ENCODE measurements at regions of chr10 and their contacts with region 1.

Region 1: GRCh38 chr10:77494327-77494726 is 143.3 kb downstream of the KCNMA1 start:
- DNase-seq: no peak
- H3K4me3 ChIP-seq: no peak overlapping the region
- H3K27ac ChIP-seq: no peak overlapping the region
- H3K4me1 ChIP-seq: peaks cover 2 to 4% (median 3%) of the 10 kb centered on the region in 4 experiments; a peak in 3 of 7 replicates
- H3K27me3 ChIP-seq: no peaks in the 10 kb centered on the region
- CTCF ChIP-seq: peak; percentile 53 to 67 (median 66)
- EP300 ChIP-seq: no peak
- POLR2A ChIP-seq: no peak
- RAD21 ChIP-seq: peak; percentile 76 to 79

Region 2: GRCh38 chr10:77436257-77436975 is 57.9 kb before region 1 on chr10:
- CTCF ChIA-PET with region 1: no interaction called
- POLR2A ChIA-PET with region 1: no interaction called
- DNase-seq: no peak
- H3K4me3 ChIP-seq: no peak overlapping the region
- H3K27ac ChIP-seq: no peak overlapping the region
- H3K4me1 ChIP-seq: peaks cover 0 to 12% (median 2%) of the 10 kb centered on the region in 4 experiments; a peak in 3 of 7 replicates
- H3K27me3 ChIP-seq: no peaks in the 10 kb centered on the region
- CTCF ChIP-seq: no peak
- EP300 ChIP-seq: no peak
- POLR2A ChIP-seq: no peak
- RAD21 ChIP-seq: no peak

Region 3: GRCh38 chr10:77456414-77456813 is 37.9 kb before region 1 on chr10:
- CTCF ChIA-PET with region 1: interaction called, 10 read pairs
- POLR2A ChIA-PET with region 1: no interaction called
- DNase-seq: no peak
- H3K4me3 ChIP-seq: no peak overlapping the region
- H3K27ac ChIP-seq: no peak overlapping the region
- H3K4me1 ChIP-seq: peaks cover 0 to 5% (median 2%) of the 10 kb centered on the region in 4 experiments; a peak in 3 of 7 replicates
- H3K27me3 ChIP-seq: peaks cover 0 to 1% (median 0%) of the 10 kb centered on the region in 4 experiments; a peak in 1 of 7 replicates
- CTCF ChIP-seq: no peak
- EP300 ChIP-seq: no peak
- POLR2A ChIP-seq: no peak
- RAD21 ChIP-seq: no peak

Region 4: GRCh38 chr10:77603534-77603927 is 109.2 kb after region 1 on chr10:
- CTCF ChIA-PET with region 1: interaction called, 37 read pairs
- POLR2A ChIA-PET with region 1: no interaction called
- DNase-seq: no peak
- H3K4me3 ChIP-seq: no peak overlapping the region
- H3K27ac ChIP-seq: no peak overlapping the region
- H3K4me1 ChIP-seq: peaks cover 1 to 8% (median 4%) of the 10 kb centered on the region in 4 experiments; a peak in 4 of 7 replicates
- H3K27me3 ChIP-seq: no peaks in the 10 kb centered on the region
- CTCF ChIP-seq: no peak
- EP300 ChIP-seq: no peak
- POLR2A ChIP-seq: no peak
- RAD21 ChIP-seq: no peak

Region 5: DNA sequence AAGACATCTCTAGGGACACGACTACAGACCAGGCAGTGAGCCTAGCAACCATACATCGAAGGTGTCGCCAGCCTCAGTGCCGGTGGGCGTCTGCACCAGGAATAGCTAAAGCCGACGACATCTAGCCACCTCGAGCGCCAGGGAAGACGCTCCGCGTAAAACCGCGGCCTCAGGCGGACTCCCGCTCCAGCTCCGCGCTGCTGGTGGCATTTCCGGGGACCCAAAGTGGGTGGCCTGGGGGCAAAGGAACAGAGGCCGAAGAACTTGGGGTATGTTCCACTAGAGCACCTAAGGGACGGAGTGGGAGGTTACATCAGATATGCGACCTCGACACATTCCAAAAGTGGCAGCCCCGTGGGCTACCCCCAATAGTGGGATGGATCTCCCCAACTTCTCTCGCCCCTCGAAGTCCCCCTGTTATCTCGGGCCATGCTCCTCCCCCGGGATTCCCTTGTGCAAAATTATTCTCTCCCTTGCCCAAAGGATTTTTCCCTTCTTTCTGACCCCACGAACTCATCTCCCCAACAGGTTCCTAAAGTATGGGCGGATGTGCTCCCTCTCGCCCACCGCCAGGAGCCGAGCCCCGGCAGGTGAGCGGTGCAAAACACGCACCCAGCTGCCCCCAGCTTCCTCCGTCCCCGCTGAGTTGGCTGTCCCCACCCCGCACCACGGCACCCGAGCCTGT is 142.1 kb after region 1 on chr10:
- CTCF ChIA-PET with region 1: interaction called, 25 read pairs
- POLR2A ChIA-PET with region 1: no interaction called
- DNase-seq: peak in 1 of 2 experiments; percentile 67
- H3K4me3 ChIP-seq: peak overlapping the region; percentile 66 to 86 (median 84)
- H3K27ac ChIP-seq: no peak overlapping the region
- H3K4me1 ChIP-seq: peaks cover 6 to 16% (median 11%) of the 10 kb centered on the region in 4 experiments
- H3K27me3 ChIP-seq: peaks cover 16 to 48% (median 46%) of the 10 kb centered on the region in 4 experiments
- CTCF ChIP-seq: no peak
- EP300 ChIP-seq: no peak
- POLR2A ChIP-seq: no peak
- RAD21 ChIP-seq: no peak